Activated naive CD4-positive, alpha-beta T cell treated with anti-CD3 and anti-CD28 coated beads for 36 hours (primary cell): ENCODE measurements at regions of chr1 and their contacts with region 1.

Region 1: DNA sequence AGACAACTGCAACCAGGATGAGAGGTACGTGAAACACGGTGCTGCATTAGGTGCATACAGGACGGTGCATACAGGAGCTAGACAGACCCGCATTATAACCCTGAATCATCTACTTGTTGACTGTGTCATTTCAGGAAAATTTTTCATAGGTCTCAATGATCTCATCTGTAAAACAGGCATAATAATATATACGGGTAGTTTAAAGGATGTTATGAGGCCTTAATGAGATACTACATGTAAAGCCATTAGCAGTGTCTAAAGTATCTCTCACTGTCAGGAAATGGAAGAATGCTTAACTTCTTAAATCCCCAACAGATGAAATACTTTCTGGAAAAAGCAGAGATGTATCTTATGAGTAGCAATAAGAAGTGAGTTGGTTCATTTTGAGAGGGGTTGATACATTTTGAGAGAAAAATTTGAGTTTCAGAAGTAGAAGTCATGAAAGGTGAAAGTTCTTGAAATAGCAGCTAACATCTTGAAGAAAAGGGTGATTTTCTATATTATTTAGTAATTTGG is 669.5 kb downstream of the PTPRC start:
- DNase-seq: no peak
- H3K4me3 Mint-ChIP-seq: no peak overlapping the region
- H3K27ac Mint-ChIP-seq: peak overlapping the region; percentile 51
- H3K4me1 Mint-ChIP-seq: peaks cover 31% of the 10 kb centered on the region
- H3K27me3 Mint-ChIP-seq: peaks cover 25% of the 10 kb centered on the region

Region 2: DNA sequence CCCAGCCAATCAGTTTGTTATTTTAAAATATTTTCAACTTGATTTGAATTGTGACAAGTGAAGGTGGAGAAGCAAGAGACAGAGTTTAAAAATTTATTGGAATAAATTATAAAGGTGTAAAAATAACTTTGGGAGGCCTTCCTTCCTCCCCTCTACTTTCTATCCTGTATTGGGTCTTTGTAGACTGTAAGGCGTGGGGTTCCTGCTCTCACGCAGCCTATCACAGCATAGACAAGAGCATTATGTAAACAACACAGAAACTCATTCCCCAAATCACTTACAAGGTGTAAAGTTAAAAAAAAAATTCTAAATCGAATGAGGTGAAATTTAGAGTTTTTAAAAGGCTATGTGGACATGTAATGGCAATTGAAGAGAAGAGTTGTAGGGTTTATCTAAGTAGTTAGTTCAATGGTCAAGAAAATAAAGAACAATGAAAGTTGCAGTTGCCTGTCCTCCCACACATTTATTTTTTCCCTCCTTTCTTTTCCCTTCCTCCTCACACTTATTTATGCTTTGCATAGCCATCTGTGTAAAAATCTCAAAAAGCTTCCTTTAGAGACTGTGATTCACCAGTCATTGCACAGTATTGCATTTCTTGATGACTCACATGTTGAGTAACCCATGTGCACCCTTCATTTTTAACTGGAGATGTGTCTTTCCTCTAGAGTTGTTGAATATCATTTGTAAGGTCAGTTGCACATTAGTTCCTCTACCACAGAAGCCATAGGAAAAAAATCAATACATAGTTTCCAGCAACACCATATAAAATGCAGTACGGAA is 427.4 kb before region 1 on chr1:
- CTCF ChIA-PET with region 1: no interaction called
- intact Hi-C with region 1: loop called (anchors 1 kb)
- DNase-seq: peak; percentile 40
- H3K4me3 Mint-ChIP-seq: no peak overlapping the region
- H3K27ac Mint-ChIP-seq: peak overlapping the region; percentile 32
- H3K4me1 Mint-ChIP-seq: peaks cover 33% of the 10 kb centered on the region
- H3K27me3 Mint-ChIP-seq: no peaks in the 10 kb centered on the region

Region 3: DNA sequence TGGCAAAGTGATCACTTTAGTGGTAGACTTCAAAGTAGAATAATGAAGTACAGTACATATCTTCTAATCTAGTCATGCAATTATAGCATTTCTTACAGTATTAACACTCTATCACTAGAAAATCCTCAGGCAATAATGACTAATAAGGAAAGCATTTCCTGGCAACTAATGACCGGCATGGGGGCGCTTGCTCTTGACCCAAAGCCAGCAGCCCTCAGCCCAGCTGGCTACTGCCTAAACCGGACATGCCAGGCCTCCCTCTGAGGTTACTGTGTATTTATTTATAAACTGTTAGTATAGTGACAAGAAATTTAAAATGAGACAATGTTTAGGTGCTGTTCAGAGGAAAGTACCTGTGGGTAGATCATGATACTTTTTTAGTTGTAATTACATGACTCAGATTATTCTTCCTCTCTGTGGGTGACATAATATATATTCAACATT is 35.7 kb before region 1 on chr1:
- CTCF ChIA-PET with region 1: no interaction called
- intact Hi-C with region 1: loop called (anchors 2 kb)
- DNase-seq: no peak
- H3K4me3 Mint-ChIP-seq: no peak overlapping the region
- H3K27ac Mint-ChIP-seq: no peak overlapping the region
- H3K4me1 Mint-ChIP-seq: peaks cover 12% of the 10 kb centered on the region
- H3K27me3 Mint-ChIP-seq: peaks cover 3% of the 10 kb centered on the region